Sciatic nerve (tissue), 2 donors: ENCODE measurements at regions of chr4 and their contacts with region 1.

Region 1: DNA sequence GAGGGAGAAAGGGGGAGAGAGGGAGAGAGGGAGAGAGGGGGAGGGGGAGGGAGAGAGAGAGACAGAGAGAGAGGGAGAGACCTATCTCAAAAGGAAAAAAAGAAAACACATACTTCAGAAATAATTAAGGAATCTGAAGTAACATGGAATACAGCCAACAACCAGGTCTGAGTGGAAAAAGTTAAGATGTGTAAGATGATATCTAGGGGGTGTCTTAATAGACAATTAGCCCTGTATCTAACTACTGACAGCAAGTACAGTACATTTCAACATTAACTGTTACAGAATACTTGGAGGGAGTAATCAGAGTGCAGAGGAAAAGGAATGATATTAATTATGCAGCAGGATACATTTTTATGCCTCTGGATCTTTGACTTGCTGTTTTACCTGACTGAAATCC is 22.4 kb downstream of the NUP54 start:
- DNase-seq: no peak
- ATAC-seq: no peak

Region 2: GRCh38 chr4:76096076-76096475 is 29.7 kb before region 1 on chr4:
- intact Hi-C with region 1: loop called (anchors 2 kb)
- DNase-seq: no peak
- ATAC-seq: no peak

Region 3: GRCh38 chr4:76723924-76724323 is 598.1 kb after region 1 on chr4:
- intact Hi-C with region 1: no loop called
- DNase-seq: no peak
- ATAC-seq: peak; percentile 91

Region 4: DNA sequence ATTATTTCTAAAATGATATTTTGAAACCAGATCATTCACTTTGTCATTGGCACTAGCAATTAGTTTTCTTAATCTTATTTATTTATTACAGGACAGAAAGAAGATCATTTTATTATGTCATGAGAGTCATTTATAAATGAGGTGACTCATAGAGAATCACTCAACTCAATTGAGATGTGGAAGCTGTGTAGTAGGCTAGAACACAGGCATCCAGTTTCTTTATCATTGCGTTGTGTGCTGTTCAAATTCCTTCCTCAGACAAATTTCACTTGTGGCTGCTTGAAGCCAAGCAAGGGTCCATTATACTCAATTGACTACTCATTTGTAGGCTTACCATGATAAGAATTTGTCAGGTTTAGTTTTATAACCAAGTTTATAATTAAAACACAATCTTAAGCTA is 1824.4 kb after region 1 on chr4:
- intact Hi-C with region 1: loop called (anchors 5 kb)
- DNase-seq: no peak
- ATAC-seq: no peak